Ovary (tissue), 10 donors: ENCODE measurements at regions of chr1 and their contacts with region 1.

Region 1: GRCh38 chr1:94792473-94793295 is 27.5 kb upstream of the SLC44A3 start:
- DNase-seq: no peak
- H3K4me3 ChIP-seq: no peak overlapping the region
- H3K27ac ChIP-seq: peak overlapping the region in 1 of 2 donors; percentile 63
- H3K4me1 ChIP-seq: peaks cover 11% of the 10 kb centered on the region
- H3K27me3 ChIP-seq: no peaks in the 10 kb centered on the region
- CTCF ChIP-seq: peak in 2 of 3 donors; percentile 9 to 30
- EP300 ChIP-seq: no peak
- POLR2A ChIP-seq: no peak

Region 2: GRCh38 chr1:94734963-94735899 is 57.5 kb before region 1 on chr1:
- intact Hi-C with region 1: loop called in 1 of 4 experiments (anchors 5 kb)
- DNase-seq: peak; percentile 54 to 67 (median 57)
- H3K4me3 ChIP-seq: no peak overlapping the region
- H3K27ac ChIP-seq: peak overlapping the region; percentile 16 to 68
- H3K4me1 ChIP-seq: peaks cover 13% of the 10 kb centered on the region
- H3K27me3 ChIP-seq: no peaks in the 10 kb centered on the region
- CTCF ChIP-seq: no peak
- EP300 ChIP-seq: no peak
- POLR2A ChIP-seq: no peak